ENCODE measurements at regions of chr1 and their contacts with region 1.

Region 1: GRCh38 chr1:116680752-116681151 is 13.2 kb upstream of the IGSF3 start:
- DNase-seq: no peak
- ATAC-seq: no peak
- H3K4me3 ChIP-seq: no peak overlapping the region
- H3K27ac ChIP-seq: peak overlapping the region; percentile 84
- H3K4me1 ChIP-seq: peaks cover 43 to 54% of the 10 kb centered on the region in 2 experiments
- H3K27me3 ChIP-seq: no peaks in the 10 kb centered on the region
- CTCF ChIP-seq: no peak
- EP300 ChIP-seq: no peak
- POLR2A ChIP-seq: no peak
- RAD21 ChIP-seq: no peak

Region 2: GRCh38 chr1:116751146-116751545 is 70.4 kb after region 1 on chr1:
- CTCF ChIA-PET with region 1: no interaction called
- POLR2A ChIA-PET with region 1: no interaction called
- in situ Hi-C with region 1: no loop called
- intact Hi-C with region 1: no loop called
- DNase-seq: no peak
- ATAC-seq: no peak
- H3K4me3 ChIP-seq: no peak overlapping the region
- H3K27ac ChIP-seq: no peak overlapping the region
- H3K4me1 ChIP-seq: no peaks in the 10 kb centered on the region; a peak in 2 of 5 replicates
- H3K27me3 ChIP-seq: no peaks in the 10 kb centered on the region
- CTCF ChIP-seq: no peak
- EP300 ChIP-seq: no peak
- POLR2A ChIP-seq: no peak
- RAD21 ChIP-seq: no peak

Region 3: GRCh38 chr1:116817582-116818064 is 136.9 kb after region 1 on chr1:
- CTCF ChIA-PET with region 1: no interaction called
- POLR2A ChIA-PET with region 1: no interaction called
- in situ Hi-C with region 1: no loop called
- intact Hi-C with region 1: loop called (anchors 5 kb)
- DNase-seq: peak; percentile 86 to 96 (median 92)
- ATAC-seq: peak; percentile 99
- H3K4me3 ChIP-seq: no peak overlapping the region
- H3K27ac ChIP-seq: no peak overlapping the region
- H3K4me1 ChIP-seq: no peaks in the 10 kb centered on the region; a peak in 1 of 5 replicates
- H3K27me3 ChIP-seq: no peaks in the 10 kb centered on the region
- CTCF ChIP-seq: peak; percentile 96 to 98 (median 98)
- EP300 ChIP-seq: 0 out of 2 replicates have a peak, but pooled peaks have one; percentile 10
- POLR2A ChIP-seq: no peak
- RAD21 ChIP-seq: peak; percentile 83 to 97

Region 4: DNA sequence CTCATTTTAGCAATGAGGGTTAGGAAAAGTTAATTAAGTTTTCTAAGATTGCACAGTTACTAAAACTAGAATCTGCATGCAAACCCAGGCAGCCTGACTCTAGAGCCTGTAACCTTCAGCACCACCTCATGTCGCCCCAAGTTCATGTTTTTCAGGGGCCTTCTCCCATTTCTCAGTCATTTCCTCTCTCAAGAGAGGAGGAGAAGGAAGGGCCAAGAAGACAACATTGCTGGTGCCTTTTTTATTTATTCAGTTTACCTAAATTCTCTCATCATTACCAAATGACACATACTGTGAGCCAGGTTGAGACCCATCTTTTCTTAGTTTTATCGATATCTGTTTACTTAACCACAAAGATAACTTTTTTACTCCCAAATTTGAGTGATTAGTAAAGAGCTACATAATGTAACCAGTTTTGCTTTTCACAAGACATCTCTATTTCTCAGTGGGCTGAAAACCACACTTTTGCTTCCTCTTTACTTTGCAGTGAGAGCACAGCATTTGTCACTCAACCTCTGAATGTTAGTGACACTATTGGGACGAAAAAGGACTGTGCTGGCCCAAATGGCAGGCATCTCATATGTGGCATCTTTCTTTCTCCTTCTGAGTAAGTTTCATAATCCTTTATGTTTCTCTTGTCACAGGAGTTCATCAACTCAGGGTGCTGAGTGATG is 320.6 kb after region 1 on chr1 and contains the start of gene CD101:
- CTCF ChIA-PET with region 1: no interaction called
- POLR2A ChIA-PET with region 1: no interaction called
- in situ Hi-C with region 1: no loop called
- intact Hi-C with region 1: no loop called
- DNase-seq: no peak
- ATAC-seq: no peak
- H3K4me3 ChIP-seq: no peak within 1 kb of the TSS
- H3K27ac ChIP-seq: no peak within 1 kb of the TSS
- H3K4me1 ChIP-seq: no peaks in the 10 kb centered on the region
- H3K27me3 ChIP-seq: no peaks in the 10 kb centered on the region; a peak in 2 of 5 replicates
- CTCF ChIP-seq: no peak
- EP300 ChIP-seq: no peak
- POLR2A ChIP-seq: no peak
- RAD21 ChIP-seq: no peak
- polyA plus RNA-seq, gene CD101: 0.18 to 0.20 TPM

Measured in K562 (cell line).